ENCODE measurements at regions of chr10 and their contacts with region 1.

Region 1: GRCh38 chr10:73848821-73849489 is 25.4 kb downstream of the CAMK2G start:
- DNase-seq: peak; percentile 97
- ATAC-seq: peak; percentile 100
- H3K4me3 Mint-ChIP-seq: no peak overlapping the region
- H3K27ac Mint-ChIP-seq: peak overlapping the region; percentile 76
- H3K4me1 Mint-ChIP-seq: peaks cover 12% of the 10 kb centered on the region
- H3K27me3 Mint-ChIP-seq: no peaks in the 10 kb centered on the region
- CTCF ChIP-seq: peak; percentile 94

Region 2: GRCh38 chr10:73310475-73310874 is 538.5 kb before region 1 on chr10:
- CTCF ChIA-PET with region 1: no interaction called
- POLR2A ChIA-PET with region 1: no interaction called
- intact Hi-C with region 1: no loop called
- DNase-seq: no peak
- ATAC-seq: no peak
- H3K4me3 Mint-ChIP-seq: no peak overlapping the region
- H3K27ac Mint-ChIP-seq: no peak overlapping the region
- H3K4me1 Mint-ChIP-seq: no peaks in the 10 kb centered on the region
- H3K27me3 Mint-ChIP-seq: no peaks in the 10 kb centered on the region
- CTCF ChIP-seq: no peak

Region 3: DNA sequence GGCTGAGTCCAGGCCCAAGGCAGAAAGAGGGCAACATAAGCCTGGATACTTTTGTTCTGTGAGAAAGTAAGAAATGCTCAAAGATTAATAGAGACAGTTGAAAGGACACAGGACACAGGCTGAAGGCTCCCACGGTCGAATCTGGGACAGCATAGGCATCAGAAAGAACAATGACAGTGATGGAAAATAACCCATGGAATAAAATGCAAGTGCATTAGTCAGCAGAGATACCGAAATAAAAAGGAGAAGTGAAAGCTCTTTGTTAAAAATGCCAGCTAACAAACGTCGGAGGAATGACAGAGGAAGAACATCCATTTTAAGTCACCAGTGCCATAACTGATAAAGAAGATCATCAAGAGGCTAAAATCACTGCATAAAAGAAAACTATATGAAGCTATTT is 131.4 kb before region 1 on chr10:
- CTCF ChIA-PET with region 1: no interaction called
- POLR2A ChIA-PET with region 1: no interaction called
- intact Hi-C with region 1: no loop called
- DNase-seq: no peak
- ATAC-seq: no peak
- H3K4me3 Mint-ChIP-seq: no peak overlapping the region
- H3K27ac Mint-ChIP-seq: no peak overlapping the region
- H3K4me1 Mint-ChIP-seq: peaks cover 4% of the 10 kb centered on the region
- H3K27me3 Mint-ChIP-seq: no peaks in the 10 kb centered on the region
- CTCF ChIP-seq: no peak

Region 4: DNA sequence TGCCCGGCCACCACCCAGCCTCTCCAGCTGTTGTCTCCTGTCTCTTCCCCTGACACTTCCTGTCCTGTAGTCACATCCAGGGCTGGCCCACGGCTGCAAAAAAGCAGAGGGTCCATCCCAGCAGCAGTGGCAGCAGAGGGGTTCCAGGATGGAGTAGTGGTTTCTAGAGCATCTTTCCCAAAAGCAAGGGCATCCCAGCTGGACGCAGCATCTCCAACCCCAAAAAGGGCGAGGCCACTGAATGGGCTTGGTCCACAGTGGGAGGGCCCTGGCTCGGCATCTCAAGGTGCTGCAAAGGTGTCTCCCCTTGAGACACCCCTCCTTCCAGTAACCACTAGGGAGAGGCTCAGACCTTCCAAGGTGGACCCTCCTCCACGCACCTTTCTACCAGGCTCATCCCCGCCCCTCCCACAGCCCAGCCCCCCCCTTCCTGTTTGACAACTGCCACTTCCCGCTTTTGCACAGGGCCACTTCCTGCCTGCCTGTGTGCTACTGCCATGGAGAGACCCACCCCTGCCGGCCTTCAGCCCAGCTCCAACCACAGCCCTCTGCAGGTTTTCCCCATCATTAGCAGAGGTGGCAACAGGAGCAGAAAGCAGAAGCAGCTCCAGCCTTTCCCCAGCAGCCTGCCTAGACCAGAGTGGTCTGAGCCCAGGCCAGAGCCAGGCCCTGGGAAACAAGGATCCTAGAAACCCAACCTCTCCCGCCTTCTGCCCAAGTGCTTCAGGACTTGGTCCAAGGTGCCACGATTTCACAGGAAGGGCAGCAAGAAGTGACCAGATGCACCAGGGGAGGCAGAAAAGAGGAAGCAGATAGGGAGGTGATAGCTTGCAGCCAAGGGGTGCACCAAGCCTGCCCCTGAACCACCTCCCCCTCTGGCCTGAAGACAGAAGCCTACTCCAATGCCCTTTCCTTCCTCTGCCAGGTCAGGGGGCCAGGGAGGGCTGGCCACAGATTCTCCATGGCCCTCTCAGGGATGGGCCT is 16.8 kb after region 1 on chr10:
- CTCF ChIA-PET with region 1: interaction called, 22 read pairs
- POLR2A ChIA-PET with region 1: interaction called, 7 read pairs
- intact Hi-C with region 1: no loop called
- DNase-seq: peak; percentile 64
- ATAC-seq: peak; percentile 84
- H3K4me3 Mint-ChIP-seq: peak overlapping the region; percentile 76
- H3K27ac Mint-ChIP-seq: peak overlapping the region; percentile 99
- H3K4me1 Mint-ChIP-seq: peaks cover 69% of the 10 kb centered on the region
- H3K27me3 Mint-ChIP-seq: no peaks in the 10 kb centered on the region
- CTCF ChIP-seq: no peak

Region 5: GRCh38 chr10:73874267-73875138 is 25.5 kb after region 1 on chr10 and contains the start of gene CAMK2G:
- CTCF ChIA-PET with region 1: interaction called, 430 read pairs
- POLR2A ChIA-PET with region 1: interaction called, 22 read pairs
- intact Hi-C with region 1: loop called (anchors 1 kb)
- DNase-seq: peak; percentile 86
- ATAC-seq: peak; percentile 85
- H3K4me3 Mint-ChIP-seq: peak within 1 kb of the TSS; percentile 82
- H3K27ac Mint-ChIP-seq: peak within 1 kb of the TSS; percentile 92
- H3K4me1 Mint-ChIP-seq: peaks cover 65% of the 10 kb centered on the region
- H3K27me3 Mint-ChIP-seq: no peaks in the 10 kb centered on the region
- CTCF ChIP-seq: no peak
- total RNA-seq, gene CAMK2G: 17.8 to 18.5 TPM

Region 6: DNA sequence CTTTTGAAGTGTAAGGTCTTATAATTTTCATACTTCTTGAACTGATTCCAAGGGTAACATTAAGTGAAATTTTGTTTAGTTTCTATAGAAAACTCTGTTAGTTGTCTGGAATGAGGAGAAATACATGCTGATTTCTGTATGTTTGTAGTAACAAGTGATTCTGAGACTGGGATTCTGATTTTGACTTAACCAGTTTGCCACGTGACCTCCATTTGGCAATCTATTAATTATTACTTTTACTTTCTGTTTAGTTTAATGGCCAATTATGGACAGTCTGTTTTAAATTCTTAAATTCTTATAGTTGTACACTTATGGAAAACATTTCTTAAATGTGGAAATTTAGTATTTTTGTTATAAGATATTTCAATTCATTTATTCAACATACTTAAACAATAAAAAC is 465.2 kb after region 1 on chr10:
- CTCF ChIA-PET with region 1: no interaction called
- POLR2A ChIA-PET with region 1: no interaction called
- intact Hi-C with region 1: no loop called
- DNase-seq: no peak
- ATAC-seq: no peak
- H3K4me3 Mint-ChIP-seq: no peak overlapping the region
- H3K27ac Mint-ChIP-seq: no peak overlapping the region
- H3K4me1 Mint-ChIP-seq: peaks cover 6% of the 10 kb centered on the region
- H3K27me3 Mint-ChIP-seq: no peaks in the 10 kb centered on the region
- CTCF ChIP-seq: no peak

Measured in activated CD8-positive, alpha-beta T cell treated with anti-CD3 and anti-CD28 coated beads for 36 hours (primary cell).